ENCODE measurements at regions of chr7 and their contacts with region 1.

Region 1: DNA sequence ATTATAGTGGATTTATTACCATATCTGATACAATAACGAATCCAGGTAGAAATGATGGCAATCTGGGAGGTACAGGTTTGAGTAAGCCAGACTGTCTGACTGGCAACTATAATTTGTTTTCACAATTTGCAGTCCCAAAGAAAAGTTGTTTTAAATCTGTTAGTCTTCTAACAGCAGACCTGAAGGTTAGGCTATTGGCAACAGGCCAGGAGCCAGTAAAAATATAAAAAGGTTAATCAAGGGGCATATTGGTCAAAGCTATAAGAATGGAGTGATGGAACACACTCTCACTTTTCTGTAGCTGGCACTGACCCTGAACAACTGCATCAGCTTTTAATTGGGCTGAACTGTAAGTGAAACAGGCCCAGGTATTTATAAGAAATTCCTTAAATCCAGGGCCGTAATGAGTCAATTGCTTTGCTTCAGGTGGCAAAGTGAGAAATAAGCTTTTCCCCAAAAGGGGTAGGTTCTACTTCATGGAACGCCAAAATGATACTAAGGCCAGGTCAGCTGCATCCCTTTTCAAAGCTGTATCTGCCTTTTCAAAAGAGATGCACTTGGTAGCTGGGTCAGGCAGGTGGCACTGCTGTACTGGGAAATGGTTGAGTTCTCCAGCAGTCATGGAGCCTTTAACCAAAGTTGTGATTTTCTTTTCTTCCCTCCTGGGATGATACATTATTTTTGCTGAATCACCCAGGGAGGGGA is 7.0 kb upstream of the GPR22 start:
- DNase-seq: peak; percentile 48 to 71 (median 68)
- ATAC-seq: peak; percentile 93 to 94
- H3K4me3 ChIP-seq: no peak overlapping the region
- H3K27ac ChIP-seq: no peak overlapping the region
- H3K4me1 ChIP-seq: no peaks in the 10 kb centered on the region
- H3K27me3 ChIP-seq: no peaks in the 10 kb centered on the region

Region 2: GRCh38 chr7:106959753-106960152 is 503.1 kb before region 1 on chr7:
- intact Hi-C with region 1: no loop called
- DNase-seq: no peak
- ATAC-seq: no peak
- H3K4me3 ChIP-seq: no peak overlapping the region
- H3K27ac ChIP-seq: no peak overlapping the region
- H3K4me1 ChIP-seq: no peaks in the 10 kb centered on the region
- H3K27me3 ChIP-seq: no peaks in the 10 kb centered on the region

Region 3: GRCh38 chr7:107628461-107629064 is 165.7 kb after region 1 on chr7:
- intact Hi-C with region 1: no loop called
- DNase-seq: peak in 1 of 3 donors; percentile 23
- ATAC-seq: no peak
- H3K4me3 ChIP-seq: no peak overlapping the region
- H3K27ac ChIP-seq: no peak overlapping the region
- H3K4me1 ChIP-seq: no peaks in the 10 kb centered on the region
- H3K27me3 ChIP-seq: no peaks in the 10 kb centered on the region

Region 4: GRCh38 chr7:107725151-107725740 is 262.4 kb after region 1 on chr7:
- intact Hi-C with region 1: loop called (anchors 2 to 5 kb)
- DNase-seq: no peak
- ATAC-seq: no peak
- H3K4me3 ChIP-seq: no peak overlapping the region
- H3K27ac ChIP-seq: no peak overlapping the region
- H3K4me1 ChIP-seq: no peaks in the 10 kb centered on the region
- H3K27me3 ChIP-seq: no peaks in the 10 kb centered on the region